ENCODE measurements at regions of chr17 and their contacts with region 1.

Region 1: DNA sequence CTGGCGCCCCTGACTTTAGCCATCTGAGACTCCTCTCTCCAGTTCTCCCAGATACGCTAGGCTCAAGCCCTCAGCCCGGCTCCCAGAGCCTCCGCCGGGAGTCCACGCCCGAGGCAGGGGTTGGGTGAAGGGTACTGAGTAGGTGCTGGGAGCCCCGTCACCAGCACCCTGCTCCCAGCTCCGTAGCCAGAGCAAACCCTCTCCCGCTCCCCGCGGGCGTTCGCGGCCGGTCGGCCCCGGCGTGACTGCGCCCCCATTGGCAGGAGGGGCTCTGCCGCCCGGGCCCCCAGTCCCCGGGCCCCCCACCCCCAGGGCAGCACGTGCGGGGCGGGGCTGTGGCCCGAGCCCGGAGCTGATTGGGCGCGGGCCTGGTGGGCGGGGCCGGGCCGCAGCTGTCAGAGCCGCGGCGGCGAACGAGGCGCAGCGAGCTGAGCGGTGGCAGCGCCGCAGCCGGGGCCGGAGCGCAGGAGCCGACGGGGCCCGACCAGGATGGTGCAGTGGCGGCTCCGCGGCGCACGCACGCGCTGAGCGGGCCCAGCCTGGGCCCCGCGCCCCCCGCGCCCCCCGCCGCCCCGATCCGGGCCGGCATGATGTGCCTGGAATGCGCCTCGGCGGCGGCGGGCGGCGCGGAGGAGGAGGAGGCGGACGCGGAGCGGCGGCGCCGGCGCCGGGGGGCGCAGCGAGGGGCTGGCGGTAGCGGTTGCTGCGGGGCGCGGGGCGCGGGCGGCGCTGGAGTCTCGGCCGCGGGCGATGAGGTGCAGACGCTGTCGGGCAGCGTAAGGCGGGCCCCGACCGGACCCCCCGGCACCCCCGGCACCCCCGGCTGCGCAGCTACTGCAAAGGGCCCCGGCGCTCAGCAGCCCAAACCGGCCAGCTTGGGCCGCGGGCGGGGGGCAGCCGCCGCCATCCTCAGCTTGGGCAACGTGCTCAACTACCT is at the start of gene SPNS2:
- DNase-seq: peak; percentile 39 to 74 (median 64)
- H3K4me3 ChIP-seq: peak within 1 kb of the TSS; percentile 47
- H3K4me3 Mint-ChIP-seq: peak within 1 kb of the TSS; percentile 75 to 89 (median 84)
- H3K27ac ChIP-seq: no peak within 1 kb of the TSS
- H3K27ac Mint-ChIP-seq: peak within 1 kb of the TSS in 3 of 8 donors; percentile 42 to 69 (median 61)
- H3K4me1 ChIP-seq: peaks cover 21% of the 10 kb centered on the region
- H3K4me1 Mint-ChIP-seq: peaks cover 12 to 36% (median 23%) of the 10 kb centered on the region in 3 donors
- H3K27me3 ChIP-seq: peaks cover 17% of the 10 kb centered on the region
- H3K27me3 Mint-ChIP-seq: peaks cover 9% of the 10 kb centered on the region in 2 donors
- total RNA-seq, gene SPNS2: 0.49 to 0.50 TPM

Region 2: DNA sequence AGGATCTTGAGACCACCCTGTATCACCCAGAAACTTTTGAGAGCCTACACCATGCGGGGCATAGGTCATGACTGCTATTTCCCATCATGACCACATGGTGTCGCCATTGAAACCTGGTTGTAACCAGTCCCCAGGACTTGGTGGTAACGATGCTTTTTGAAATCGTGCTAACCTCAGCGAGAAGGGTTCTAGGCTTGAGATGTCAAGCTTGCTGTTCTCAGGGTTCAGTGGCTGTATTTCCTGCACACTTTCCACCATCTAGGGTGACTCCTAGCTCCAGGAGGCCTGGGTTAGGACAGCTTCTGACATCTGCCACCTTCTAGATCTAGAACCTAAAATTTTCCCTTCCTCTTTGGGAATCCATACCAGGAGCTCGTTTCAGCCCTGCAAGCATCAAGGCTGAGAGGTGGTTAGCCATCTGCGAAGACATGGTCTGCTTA is 78.0 kb before region 1 on chr17:
- CTCF ChIA-PET with region 1: interaction called, 11 read pairs
- POLR2A ChIA-PET with region 1: no interaction called
- DNase-seq: peak; percentile 16 to 72 (median 61)
- H3K4me3 ChIP-seq: no peak overlapping the region
- H3K4me3 Mint-ChIP-seq: no peak overlapping the region
- H3K27ac ChIP-seq: no peak overlapping the region
- H3K27ac Mint-ChIP-seq: no peak overlapping the region
- H3K4me1 ChIP-seq: no peaks in the 10 kb centered on the region
- H3K4me1 Mint-ChIP-seq: peaks cover 0 to 4% (median 3%) of the 10 kb centered on the region in 3 donors
- H3K27me3 ChIP-seq: no peaks in the 10 kb centered on the region
- H3K27me3 Mint-ChIP-seq: no peaks in the 10 kb centered on the region

Region 3: DNA sequence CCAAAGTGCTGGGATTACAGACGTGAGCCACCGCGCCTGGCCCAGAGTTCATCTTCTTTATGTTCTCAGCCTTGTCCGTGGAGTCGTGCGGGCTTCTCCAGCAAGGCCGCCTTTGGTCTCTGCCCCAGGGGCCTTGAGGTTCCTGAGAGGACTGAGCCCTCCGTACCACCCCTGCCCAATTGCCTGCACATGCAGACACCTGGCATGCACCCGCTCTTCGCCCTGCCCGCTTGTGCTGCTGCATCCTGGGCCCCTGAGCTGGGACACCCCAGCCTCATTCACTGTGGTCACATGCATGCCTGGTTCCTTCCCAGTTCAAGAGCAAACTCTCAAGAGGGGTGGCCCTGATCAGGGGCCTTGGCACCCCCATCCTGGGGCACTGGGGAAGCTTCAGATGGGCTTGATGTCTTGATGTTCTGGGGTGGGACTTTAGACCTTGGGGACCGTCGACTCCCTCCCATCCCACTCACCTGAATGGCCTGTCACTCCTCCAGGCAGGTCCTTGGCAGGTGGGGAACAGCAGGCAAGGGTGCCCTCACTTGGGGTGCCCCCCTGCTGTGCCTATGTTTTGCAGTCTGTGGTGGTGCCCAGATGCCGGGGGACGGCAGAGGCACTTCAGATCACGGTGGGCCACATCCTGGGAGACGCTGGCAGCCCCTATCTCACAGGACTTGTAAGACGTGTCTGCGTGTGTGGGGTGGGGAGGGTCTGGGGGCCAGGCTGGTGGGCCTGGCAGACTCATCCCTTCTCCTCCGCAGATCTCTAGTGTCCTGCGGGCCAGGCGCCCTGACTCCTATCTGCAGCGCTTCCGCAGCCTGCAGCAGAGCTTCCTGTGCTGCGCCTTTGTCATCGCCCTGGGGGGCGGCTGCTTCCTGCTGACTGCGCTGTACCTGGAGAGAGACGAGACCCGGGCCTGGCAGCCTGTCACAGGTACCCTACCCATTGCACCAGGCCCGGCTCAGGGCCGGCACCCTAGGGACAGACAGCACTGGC is 12.8 kb before region 1 on chr17:
- CTCF ChIA-PET with region 1: interaction called, 6 read pairs
- POLR2A ChIA-PET with region 1: interaction called, 11 read pairs
- DNase-seq: peak in 4 of 5 donors; percentile 24 to 63 (median 48)
- H3K4me3 ChIP-seq: peak overlapping the region; percentile 93
- H3K4me3 Mint-ChIP-seq: peak overlapping the region; percentile 91 to 97 (median 93)
- H3K27ac ChIP-seq: no peak overlapping the region
- H3K27ac Mint-ChIP-seq: peak overlapping the region; percentile 75 to 98 (median 94)
- H3K4me1 ChIP-seq: peaks cover 39% of the 10 kb centered on the region
- H3K4me1 Mint-ChIP-seq: peaks cover 39 to 63% (median 56%) of the 10 kb centered on the region in 3 donors
- H3K27me3 ChIP-seq: no peaks in the 10 kb centered on the region
- H3K27me3 Mint-ChIP-seq: peaks cover 0 to 2% of the 10 kb centered on the region in 2 donors

Region 4: DNA sequence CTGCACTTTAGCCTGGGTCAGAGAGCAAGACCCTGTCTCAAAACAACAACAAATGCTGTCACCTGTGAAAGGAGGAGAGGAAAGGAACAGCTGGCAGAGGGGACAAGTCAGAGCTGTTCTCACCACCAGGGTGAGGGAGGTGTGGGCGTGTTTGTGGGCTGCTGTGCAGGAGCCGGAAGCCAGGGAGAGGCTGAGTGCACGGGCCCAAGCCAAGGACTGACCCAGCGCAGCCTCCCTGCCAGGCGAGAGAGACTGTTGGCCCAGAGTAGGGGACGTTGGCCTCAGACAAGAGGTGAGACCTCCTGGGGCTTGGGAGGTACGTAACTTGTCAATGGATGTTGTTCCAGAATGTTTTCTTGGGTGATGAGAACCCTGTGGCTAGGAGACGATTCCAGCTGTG is 10.7 kb after region 1 on chr17:
- CTCF ChIA-PET with region 1: interaction called, 4 read pairs
- POLR2A ChIA-PET with region 1: interaction called, 10 read pairs
- DNase-seq: peak in 2 of 5 donors; percentile 20 to 59
- H3K4me3 ChIP-seq: no peak overlapping the region
- H3K4me3 Mint-ChIP-seq: peak overlapping the region in 5 of 7 donors; percentile 15 to 86 (median 45)
- H3K27ac ChIP-seq: no peak overlapping the region
- H3K27ac Mint-ChIP-seq: peak overlapping the region in 6 of 8 donors; percentile 13 to 86 (median 56)
- H3K4me1 ChIP-seq: peaks cover 13% of the 10 kb centered on the region
- H3K4me1 Mint-ChIP-seq: peaks cover 21 to 39% (median 24%) of the 10 kb centered on the region in 3 donors
- H3K27me3 ChIP-seq: no peaks in the 10 kb centered on the region
- H3K27me3 Mint-ChIP-seq: peaks cover 0 to 3% of the 10 kb centered on the region in 2 donors